H1 (cell line): ENCODE measurements at regions of chr9 and their contacts with region 1.

Region 1: DNA sequence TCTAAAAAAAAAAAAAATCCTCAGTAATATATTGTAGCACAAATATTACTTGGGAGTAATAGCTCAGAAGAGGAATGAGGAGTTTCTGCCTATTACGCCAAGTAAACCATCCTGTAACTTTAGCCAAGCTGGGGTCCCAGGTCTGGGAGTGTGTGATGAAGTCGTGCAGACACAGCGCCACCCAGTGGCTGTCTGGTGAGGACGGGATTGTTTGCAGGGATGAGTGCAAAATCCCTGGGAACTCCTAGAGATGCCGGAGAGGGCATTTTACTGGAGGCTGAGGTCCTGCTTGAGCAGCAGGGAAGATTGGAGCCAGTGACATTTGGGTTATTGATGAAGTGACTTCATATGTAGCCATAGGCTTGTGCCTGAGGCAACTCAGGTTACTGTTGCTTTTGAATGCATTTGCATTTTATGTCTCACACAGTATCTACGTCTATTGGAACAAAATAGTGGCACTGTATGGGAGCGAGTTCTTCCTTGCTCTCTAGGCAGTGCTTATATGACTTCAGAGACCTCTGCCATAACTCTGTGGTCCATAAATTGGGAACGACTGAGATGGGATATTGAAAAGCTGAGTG is 72.8 kb downstream of the PSAT1 start:
- DNase-seq: peak; percentile 54 to 93
- H3K4me3 ChIP-seq: no peak overlapping the region
- H3K27ac ChIP-seq: no peak overlapping the region
- H3K4me1 ChIP-seq: peaks cover 0 to 7% (median 0%) of the 10 kb centered on the region in 4 experiments; a peak in 1 of 7 replicates
- H3K27me3 ChIP-seq: no peaks in the 10 kb centered on the region
- CTCF ChIP-seq: peak; percentile 90 to 98 (median 98)
- EP300 ChIP-seq: no peak
- POLR2A ChIP-seq: no peak
- RAD21 ChIP-seq: peak; percentile 78 to 85

Region 2: DNA sequence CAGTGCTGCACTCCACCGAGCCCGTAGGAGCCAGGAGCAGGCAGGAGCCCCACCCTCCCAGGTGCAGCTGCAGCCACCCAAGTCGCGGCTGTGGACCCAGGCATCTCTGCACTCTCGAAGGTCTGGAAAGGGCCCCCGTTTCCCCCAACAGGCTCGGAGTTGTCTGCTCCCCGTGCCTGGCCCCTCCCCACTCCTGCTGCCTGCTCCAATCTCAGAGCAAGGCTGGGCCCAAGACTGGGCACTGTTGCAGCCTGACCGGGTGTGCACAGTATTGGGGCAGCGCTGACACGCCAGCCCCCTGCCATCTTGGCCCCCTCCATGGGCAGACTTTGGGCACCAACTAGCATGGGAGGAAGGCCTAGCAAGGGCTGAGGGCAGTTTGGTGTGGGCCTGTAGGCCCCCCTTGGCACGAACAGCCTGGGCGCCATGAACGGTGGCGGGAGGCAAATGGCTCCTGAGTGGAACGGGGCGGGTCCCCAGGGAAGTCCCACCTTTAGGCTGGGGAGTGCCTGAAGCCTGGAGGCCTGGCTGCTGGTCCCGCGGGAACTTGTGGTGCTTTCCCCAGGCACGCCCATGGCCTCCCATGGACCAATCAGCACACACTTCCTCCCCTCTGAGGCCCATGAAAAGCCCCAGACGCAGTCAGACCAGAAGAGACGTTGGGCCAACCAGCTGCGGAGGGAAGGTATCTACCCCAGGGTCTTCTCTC is 12.4 kb before region 1 on chr9:
- CTCF ChIA-PET with region 1: interaction called, 18 read pairs
- POLR2A ChIA-PET with region 1: interaction called, 3 read pairs
- DNase-seq: no peak
- H3K4me3 ChIP-seq: no peak overlapping the region
- H3K27ac ChIP-seq: no peak overlapping the region; the same call in 1 of the 2 replicates
- H3K4me1 ChIP-seq: no peaks in the 10 kb centered on the region
- H3K27me3 ChIP-seq: no peaks in the 10 kb centered on the region
- CTCF ChIP-seq: no peak
- EP300 ChIP-seq: no peak
- POLR2A ChIP-seq: no peak
- RAD21 ChIP-seq: no peak

Region 3: DNA sequence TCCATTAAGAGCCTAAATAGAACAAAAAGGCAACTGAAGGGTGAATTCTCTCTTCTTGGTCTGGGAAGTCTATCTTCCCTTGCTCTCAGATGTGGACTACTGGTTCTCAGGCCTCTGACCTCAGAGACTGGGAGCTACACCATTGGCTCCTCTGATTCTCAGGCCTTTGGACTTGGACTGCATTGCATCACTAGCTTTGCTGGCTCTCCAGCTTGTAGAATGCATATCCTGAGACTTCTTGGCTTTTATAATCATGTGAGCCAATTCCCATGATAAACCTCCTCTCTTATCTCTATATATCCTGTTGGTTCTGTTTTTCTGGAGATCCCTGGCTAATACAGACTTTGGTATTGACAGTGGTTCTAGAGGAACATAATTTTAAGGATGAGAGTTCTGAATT is 17.0 kb after region 1 on chr9:
- CTCF ChIA-PET with region 1: interaction called, 12 read pairs
- POLR2A ChIA-PET with region 1: no interaction called
- DNase-seq: no peak
- H3K4me3 ChIP-seq: no peak overlapping the region
- H3K27ac ChIP-seq: no peak overlapping the region
- H3K4me1 ChIP-seq: peaks cover 0 to 3% (median 2%) of the 10 kb centered on the region in 4 experiments; a peak in 2 of 7 replicates
- H3K27me3 ChIP-seq: peaks cover 0 to 1% (median 0%) of the 10 kb centered on the region in 4 experiments; a peak in 1 of 7 replicates
- CTCF ChIP-seq: no peak
- EP300 ChIP-seq: no peak
- POLR2A ChIP-seq: no peak
- RAD21 ChIP-seq: no peak

Region 4: GRCh38 chr9:78397454-78397853 is 27.7 kb after region 1 on chr9:
- CTCF ChIA-PET with region 1: interaction called, 15 read pairs
- POLR2A ChIA-PET with region 1: no interaction called
- DNase-seq: no peak
- H3K4me3 ChIP-seq: 0 out of 8 replicates have a peak overlapping the region, but pooled peaks of 1 of the 4 experiments have one; percentile 14
- H3K27ac ChIP-seq: no peak overlapping the region
- H3K4me1 ChIP-seq: peaks cover 5 to 29% (median 19%) of the 10 kb centered on the region in 4 experiments; a peak in 5 of 7 replicates
- H3K27me3 ChIP-seq: no peaks in the 10 kb centered on the region; a peak in 1 of 7 replicates
- CTCF ChIP-seq: no peak
- EP300 ChIP-seq: no peak
- POLR2A ChIP-seq: no peak
- RAD21 ChIP-seq: no peak

Region 5: DNA sequence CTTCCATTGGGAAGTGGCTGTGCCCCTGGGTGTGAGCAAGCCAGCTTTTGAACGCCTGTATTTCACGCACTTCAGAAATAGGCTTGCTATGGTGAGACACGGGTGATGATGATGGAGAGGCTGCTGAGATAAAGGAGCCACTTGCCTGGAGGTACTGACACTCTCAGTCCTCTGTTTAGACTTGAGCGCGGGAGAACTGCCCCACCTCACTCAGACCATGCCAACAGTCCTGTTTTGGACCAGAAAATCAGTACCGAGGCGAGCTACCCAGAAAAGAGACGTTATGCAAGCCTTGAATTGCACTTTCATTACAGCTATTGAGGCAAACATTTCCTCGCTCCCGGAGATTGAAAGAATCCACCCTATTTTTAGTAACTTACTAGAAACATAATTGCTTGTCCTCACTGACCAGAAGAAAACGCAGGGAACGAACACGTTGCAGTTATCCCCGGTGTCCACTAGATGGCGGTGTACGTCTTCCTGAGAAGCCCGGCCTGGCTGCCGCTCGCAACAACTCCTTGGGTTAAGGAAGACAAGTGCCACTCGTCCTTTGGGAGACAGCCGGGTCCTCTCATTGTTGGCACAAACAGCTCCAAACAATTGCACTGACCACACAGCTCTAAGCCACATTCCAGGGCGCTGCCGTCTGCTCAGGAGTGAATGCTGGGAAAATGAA is 69.6 kb after region 1 on chr9:
- CTCF ChIA-PET with region 1: interaction called, 11 read pairs
- POLR2A ChIA-PET with region 1: no interaction called
- DNase-seq: peak; percentile 75 to 90
- H3K4me3 ChIP-seq: peak overlapping the region in 1 of 4 experiments; percentile 11; a peak in 1 of 8 replicates
- H3K27ac ChIP-seq: no peak overlapping the region
- H3K4me1 ChIP-seq: peaks cover 7 to 23% (median 17%) of the 10 kb centered on the region in 4 experiments
- H3K27me3 ChIP-seq: no peaks in the 10 kb centered on the region
- CTCF ChIP-seq: peak; percentile 90 to 96 (median 93)
- EP300 ChIP-seq: no peak
- POLR2A ChIP-seq: no peak
- RAD21 ChIP-seq: peak; percentile 96 to 99

Region 6: DNA sequence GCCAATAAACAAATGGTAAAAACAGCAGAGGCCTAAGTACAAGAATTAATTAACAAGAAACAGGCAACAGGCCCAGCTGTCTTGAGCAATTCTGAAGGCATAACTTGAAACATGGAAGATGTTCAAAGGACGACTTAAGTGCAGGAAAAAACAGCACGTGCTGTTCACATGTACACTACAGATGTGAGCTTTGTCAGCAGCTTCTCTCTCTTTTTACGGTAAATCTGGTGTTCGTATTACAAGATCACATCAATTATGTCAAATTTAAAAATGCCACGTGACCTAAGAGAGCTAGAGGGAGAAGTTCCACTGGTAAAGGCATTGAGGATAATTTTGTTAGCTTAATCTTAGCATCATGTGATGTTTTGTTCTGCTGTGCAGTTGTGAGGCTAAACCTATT is 208.3 kb after region 1 on chr9:
- CTCF ChIA-PET with region 1: no interaction called
- POLR2A ChIA-PET with region 1: no interaction called
- DNase-seq: no peak
- H3K4me3 ChIP-seq: no peak overlapping the region
- H3K27ac ChIP-seq: no peak overlapping the region
- H3K4me1 ChIP-seq: peaks cover 0 to 7% (median 5%) of the 10 kb centered on the region in 4 experiments; a peak in 3 of 7 replicates
- H3K27me3 ChIP-seq: no peaks in the 10 kb centered on the region
- CTCF ChIP-seq: no peak
- EP300 ChIP-seq: no peak
- POLR2A ChIP-seq: no peak
- RAD21 ChIP-seq: no peak